Cardiac septum (tissue), 1 donor: ENCODE measurements at regions of chr17 and their contacts with region 1.

Region 1: GRCh38 chr17:76278952-76279741 is 14.0 kb downstream of the UBALD2 start:
- DNase-seq: peak; percentile 93

Region 2: DNA sequence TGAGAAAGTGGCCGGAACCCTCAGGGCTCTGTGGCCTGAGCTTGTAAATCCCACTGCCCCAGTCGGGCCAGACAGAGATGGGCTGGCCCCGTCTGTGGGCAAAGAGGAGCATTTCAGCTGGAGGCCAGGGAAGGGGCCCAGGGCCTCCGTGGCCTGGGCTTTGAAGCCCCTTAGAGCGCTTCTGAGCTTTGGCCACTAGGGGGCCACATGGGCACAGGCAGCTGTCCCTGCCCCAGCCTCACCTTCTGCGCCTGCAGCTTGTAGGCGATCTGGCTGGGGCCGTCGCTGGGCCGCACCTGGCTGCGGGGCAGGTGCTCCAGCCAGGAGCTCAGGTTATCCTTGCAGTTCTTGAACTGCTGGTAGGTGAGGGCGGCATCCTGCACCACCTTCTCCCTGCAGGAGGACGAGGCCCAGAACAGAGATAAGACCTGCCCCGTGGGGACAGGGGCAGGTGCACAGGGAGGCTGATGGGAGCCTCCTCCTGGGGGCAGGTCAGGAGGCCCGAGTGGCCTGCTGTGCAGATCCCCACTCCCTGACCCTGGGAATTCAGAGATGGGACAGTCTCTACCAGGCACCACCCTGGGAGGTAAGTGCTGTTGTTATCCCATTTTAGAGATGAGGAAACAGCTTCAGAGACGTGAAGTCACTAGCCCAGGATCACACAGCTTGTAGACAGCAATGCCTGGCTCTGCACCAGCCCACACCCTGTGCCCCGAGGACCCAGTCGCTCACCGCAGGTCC is 264.8 kb before region 1 on chr17:
- intact Hi-C with region 1: loop called (anchors 5 kb)
- DNase-seq: peak; percentile 85

Region 3: DNA sequence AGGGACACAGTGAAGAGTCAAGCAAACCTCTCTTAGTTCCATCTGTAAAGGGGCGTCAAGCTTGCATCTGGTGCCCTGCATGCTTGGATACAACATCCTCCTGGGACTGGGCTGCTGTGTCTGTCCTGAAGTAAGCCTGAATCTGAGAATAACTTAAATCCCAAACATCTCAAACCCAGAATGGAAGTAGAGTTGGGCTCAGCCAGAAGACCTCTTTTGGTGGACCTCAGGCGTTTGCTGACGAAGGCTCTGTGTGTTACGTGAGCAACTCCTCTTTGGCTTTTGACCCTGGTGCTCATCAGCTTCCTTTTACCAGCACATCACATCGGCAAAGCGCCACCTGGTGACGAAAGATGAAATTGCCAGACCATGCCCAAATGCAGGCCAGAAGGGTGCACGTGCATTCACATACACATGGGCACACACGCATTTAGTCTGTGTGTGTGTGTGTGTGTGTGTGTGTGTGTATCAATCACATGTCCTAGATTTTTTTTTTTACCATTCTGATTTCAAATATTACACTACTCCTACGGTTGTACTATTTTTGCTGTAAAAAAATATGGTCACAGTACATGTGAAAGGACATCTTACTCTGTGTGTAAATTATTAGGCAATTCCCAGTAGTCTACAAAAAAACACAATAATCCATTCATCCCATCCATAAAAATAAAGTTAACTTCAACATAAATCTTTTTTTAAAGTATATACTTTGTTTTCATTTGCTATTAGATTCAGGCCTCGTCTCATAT is 97.0 kb before region 1 on chr17:
- intact Hi-C with region 1: loop called (anchors 2 kb)
- DNase-seq: peak; percentile 92

Region 4: DNA sequence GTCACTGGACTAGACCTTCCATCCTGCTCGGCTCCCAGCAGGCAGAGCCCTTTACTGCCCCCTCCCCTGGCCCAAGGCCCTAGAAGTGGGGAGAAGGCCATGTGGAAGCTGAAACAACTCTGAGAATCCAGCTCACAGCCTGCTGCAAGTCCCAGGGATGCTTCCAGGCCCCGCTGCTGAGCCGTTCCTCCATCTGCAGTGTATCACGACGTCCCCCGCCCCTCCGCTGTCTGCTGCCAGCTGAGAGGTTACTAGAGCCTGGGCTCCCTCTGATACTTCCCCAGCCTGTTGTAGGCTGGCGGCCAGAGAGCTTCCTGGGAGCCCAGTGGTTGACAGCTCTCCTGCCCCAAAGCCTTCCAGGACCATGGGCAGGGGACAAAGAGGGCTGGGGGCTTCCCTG is 707.2 kb after region 1 on chr17:
- intact Hi-C with region 1: no loop called
- DNase-seq: no peak